ENCODE measurements at regions of chr2 and their contacts with region 1.

Region 1: GRCh38 chr2:207166039-207166348 is 246 bp upstream of the KLF7 start:
- DNase-seq: peak; percentile 100
- H3K4me3 ChIP-seq: peak overlapping the region; percentile 80
- H3K27me3 ChIP-seq: no peaks in the 10 kb centered on the region
- CTCF ChIP-seq: no peak

Region 2: DNA sequence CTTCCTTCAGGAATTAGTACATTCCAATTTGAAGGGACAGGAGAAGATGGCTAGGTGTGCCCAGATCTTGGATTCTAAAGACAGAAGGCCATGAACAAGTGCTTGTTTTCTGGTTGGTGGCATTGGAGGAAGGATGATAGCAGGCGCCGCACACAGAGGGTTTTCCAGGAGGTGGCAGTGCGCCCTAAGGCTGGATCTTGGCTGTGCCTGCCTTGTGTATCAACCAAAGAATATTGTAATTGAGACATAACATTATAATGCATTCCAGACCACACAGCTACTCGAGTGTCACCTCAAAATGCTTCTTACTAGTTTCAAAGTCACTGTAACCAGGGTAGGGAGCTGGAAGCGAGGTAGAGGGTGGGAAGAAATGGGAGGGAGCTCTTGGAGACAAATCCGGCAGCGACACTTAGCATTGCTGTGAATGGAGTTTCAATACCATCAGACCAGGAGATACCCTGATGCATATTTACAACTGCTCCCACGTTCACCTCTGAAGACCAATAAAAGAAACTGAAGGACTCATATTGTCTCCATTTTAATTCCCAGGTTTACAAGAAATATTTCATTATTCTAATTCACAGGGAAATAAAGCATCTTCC is 184.2 kb before region 1 on chr2:
- CTCF ChIA-PET with region 1: interaction called, 11 read pairs
- POLR2A ChIA-PET with region 1: no interaction called
- DNase-seq: no peak
- H3K4me3 ChIP-seq: no peak overlapping the region
- H3K27me3 ChIP-seq: no peaks in the 10 kb centered on the region
- CTCF ChIP-seq: peak; percentile 91

Region 3: GRCh38 chr2:207184348-207184747 is 18.4 kb after region 1 on chr2:
- CTCF ChIA-PET with region 1: interaction called, 3 read pairs
- POLR2A ChIA-PET with region 1: interaction called, 11 read pairs
- DNase-seq: no peak
- H3K4me3 ChIP-seq: no peak overlapping the region
- H3K27me3 ChIP-seq: no peaks in the 10 kb centered on the region
- CTCF ChIP-seq: no peak

Region 4: GRCh38 chr2:207258263-207258991 is 92.4 kb after region 1 on chr2:
- CTCF ChIA-PET with region 1: interaction called, 25 read pairs
- POLR2A ChIA-PET with region 1: interaction called, 10 read pairs
- DNase-seq: peak; percentile 100
- H3K4me3 ChIP-seq: no peak overlapping the region
- H3K27me3 ChIP-seq: no peaks in the 10 kb centered on the region
- CTCF ChIP-seq: peak; percentile 30; the same call in 1 of the 2 replicates

Region 5: GRCh38 chr2:207504513-207505171 is 338.6 kb after region 1 on chr2:
- CTCF ChIA-PET with region 1: no interaction called
- POLR2A ChIA-PET with region 1: interaction called, 15 read pairs
- DNase-seq: no peak
- H3K4me3 ChIP-seq: no peak overlapping the region
- H3K27me3 ChIP-seq: no peaks in the 10 kb centered on the region
- CTCF ChIP-seq: peak; percentile 36

Measured in BJ (cell line).